ENCODE measurements at regions of chr2 and their contacts with region 1.

Region 1: GRCh38 chr2:121076885-121077549 is 208.0 kb downstream of the TFCP2L1 start:
- DNase-seq: no peak
- H3K4me3 ChIP-seq: no peak overlapping the region
- H3K27ac ChIP-seq: no peak overlapping the region
- H3K4me1 ChIP-seq: no peaks in the 10 kb centered on the region
- H3K27me3 ChIP-seq: peaks cover 3% of the 10 kb centered on the region
- CTCF ChIP-seq: peak; percentile 38 to 79 (median 65)

Region 2: GRCh38 chr2:120693121-120693520 is 383.9 kb before region 1 on chr2:
- intact Hi-C with region 1: loop called (anchors 1 kb)
- DNase-seq: no peak
- H3K4me3 ChIP-seq: no peak overlapping the region
- H3K27ac ChIP-seq: no peak overlapping the region
- H3K4me1 ChIP-seq: no peaks in the 10 kb centered on the region
- H3K27me3 ChIP-seq: no peaks in the 10 kb centered on the region
- CTCF ChIP-seq: no peak

Region 3: GRCh38 chr2:121018136-121019061 is 58.6 kb before region 1 on chr2:
- intact Hi-C with region 1: no loop called
- DNase-seq: no peak
- H3K4me3 ChIP-seq: peak overlapping the region in 1 of 2 donors; percentile 39
- H3K27ac ChIP-seq: peak overlapping the region in 1 of 2 donors; percentile 3
- H3K4me1 ChIP-seq: no peaks in the 10 kb centered on the region
- H3K27me3 ChIP-seq: no peaks in the 10 kb centered on the region
- CTCF ChIP-seq: no peak

Measured in ascending aorta (tissue), 2 donors.